MCF 10A (cell line): ENCODE measurements at regions of chr12 and their contacts with region 1.

Region 1: GRCh38 chr12:63276537-63277365 is 125.8 kb upstream of the AVPR1A start:
- DNase-seq: peak; percentile 67
- H3K4me3 Mint-ChIP-seq: no peak overlapping the region
- H3K27ac Mint-ChIP-seq: no peak overlapping the region
- H3K4me1 Mint-ChIP-seq: no peaks in the 10 kb centered on the region
- H3K27me3 Mint-ChIP-seq: peaks cover 64% of the 10 kb centered on the region
- CTCF ChIP-seq: peak; percentile 83

Region 2: DNA sequence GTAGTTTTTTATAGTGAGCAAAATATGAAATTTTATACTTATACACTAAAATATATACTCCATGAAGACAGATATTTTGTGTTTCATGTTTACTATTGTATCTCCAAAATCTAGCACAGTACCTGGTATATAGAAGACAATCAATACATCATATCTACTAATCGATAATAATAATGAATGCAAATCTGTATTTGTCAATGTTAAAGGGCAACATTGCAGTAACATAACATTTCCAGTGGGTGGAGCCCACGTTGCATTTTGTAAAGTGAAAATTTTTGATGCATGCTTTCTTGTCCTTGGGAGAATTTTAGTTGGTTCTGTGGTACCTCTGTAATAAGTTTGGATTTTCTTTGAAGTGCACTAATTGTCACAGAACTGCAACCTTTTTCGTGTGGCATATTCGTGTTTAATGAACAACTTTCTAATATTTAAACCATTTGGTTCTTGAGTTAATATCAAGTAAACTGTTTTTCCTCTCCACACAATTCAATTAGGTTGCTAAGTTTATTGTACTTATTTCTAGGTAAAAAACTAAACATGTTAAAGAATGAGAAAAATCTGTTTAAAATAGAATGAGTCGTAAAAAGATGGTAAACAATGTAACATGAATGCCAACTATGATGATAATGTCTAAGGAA is 173.1 kb before region 1 on chr12:
- CTCF ChIA-PET with region 1: interaction called, 6 read pairs
- POLR2A ChIA-PET with region 1: interaction called, 4 read pairs
- intact Hi-C with region 1: loop called (anchors 1 kb)
- DNase-seq: peak; percentile 41
- H3K4me3 Mint-ChIP-seq: no peak overlapping the region
- H3K27ac Mint-ChIP-seq: no peak overlapping the region
- H3K4me1 Mint-ChIP-seq: no peaks in the 10 kb centered on the region
- H3K27me3 Mint-ChIP-seq: peaks cover 34% of the 10 kb centered on the region
- CTCF ChIP-seq: peak; percentile 82

Region 3: DNA sequence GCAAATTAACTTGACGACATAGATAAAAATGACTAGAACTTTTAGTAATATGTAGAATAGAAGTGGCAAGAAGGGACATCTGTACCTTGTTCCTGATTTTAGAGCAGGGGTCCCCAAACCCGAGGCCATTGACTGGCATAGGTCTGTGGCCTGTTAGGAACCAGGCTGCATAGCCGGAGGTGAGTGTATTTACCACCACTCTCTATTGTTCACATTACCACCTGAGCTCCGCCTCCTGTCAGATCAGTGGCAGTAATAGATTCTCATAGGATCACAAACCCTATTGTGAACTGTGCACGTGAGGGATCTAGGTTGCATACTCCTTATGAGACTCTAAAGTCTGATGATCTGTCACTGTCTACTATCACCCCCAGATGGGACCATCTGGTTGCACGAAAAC is 12.1 kb before region 1 on chr12:
- CTCF ChIA-PET with region 1: interaction called, 16 read pairs
- POLR2A ChIA-PET with region 1: interaction called, 4 read pairs
- intact Hi-C with region 1: no loop called
- DNase-seq: no peak
- H3K4me3 Mint-ChIP-seq: no peak overlapping the region
- H3K27ac Mint-ChIP-seq: no peak overlapping the region
- H3K4me1 Mint-ChIP-seq: no peaks in the 10 kb centered on the region
- H3K27me3 Mint-ChIP-seq: peaks cover 59% of the 10 kb centered on the region
- CTCF ChIP-seq: no peak

Region 4: DNA sequence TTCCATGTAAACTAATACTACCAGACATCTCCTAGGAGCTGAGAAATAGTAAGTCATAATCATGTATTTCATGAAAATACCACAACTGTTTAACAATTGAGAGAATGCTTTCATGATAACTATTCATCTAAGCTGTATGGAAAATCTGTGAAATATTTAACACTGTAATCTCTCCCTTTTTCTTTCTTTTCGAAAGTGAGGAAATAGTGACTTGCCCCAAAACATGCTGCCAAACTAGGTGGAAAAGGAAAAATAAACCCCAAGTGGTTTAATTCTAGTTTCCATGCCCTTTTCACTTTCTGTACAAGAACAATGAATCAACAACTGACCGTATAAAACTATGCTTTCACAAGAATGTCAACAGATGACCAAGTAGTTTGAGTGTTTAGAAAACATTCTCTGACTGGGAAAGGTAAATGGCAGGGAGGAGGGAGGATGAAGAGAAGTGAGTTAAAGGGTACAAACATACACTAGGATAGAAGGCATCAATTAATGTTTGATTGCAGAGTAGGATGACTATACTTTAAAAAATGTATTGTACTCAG is 21.7 kb after region 1 on chr12:
- CTCF ChIA-PET with region 1: no interaction called
- POLR2A ChIA-PET with region 1: no interaction called
- intact Hi-C with region 1: no loop called
- DNase-seq: no peak
- H3K4me3 Mint-ChIP-seq: no peak overlapping the region
- H3K27ac Mint-ChIP-seq: no peak overlapping the region
- H3K4me1 Mint-ChIP-seq: peaks cover 4% of the 10 kb centered on the region
- H3K27me3 Mint-ChIP-seq: peaks cover 58% of the 10 kb centered on the region
- CTCF ChIP-seq: no peak